Spleen (tissue), 13 donors: ENCODE measurements at regions of chr1 and their contacts with region 1.

Region 1: DNA sequence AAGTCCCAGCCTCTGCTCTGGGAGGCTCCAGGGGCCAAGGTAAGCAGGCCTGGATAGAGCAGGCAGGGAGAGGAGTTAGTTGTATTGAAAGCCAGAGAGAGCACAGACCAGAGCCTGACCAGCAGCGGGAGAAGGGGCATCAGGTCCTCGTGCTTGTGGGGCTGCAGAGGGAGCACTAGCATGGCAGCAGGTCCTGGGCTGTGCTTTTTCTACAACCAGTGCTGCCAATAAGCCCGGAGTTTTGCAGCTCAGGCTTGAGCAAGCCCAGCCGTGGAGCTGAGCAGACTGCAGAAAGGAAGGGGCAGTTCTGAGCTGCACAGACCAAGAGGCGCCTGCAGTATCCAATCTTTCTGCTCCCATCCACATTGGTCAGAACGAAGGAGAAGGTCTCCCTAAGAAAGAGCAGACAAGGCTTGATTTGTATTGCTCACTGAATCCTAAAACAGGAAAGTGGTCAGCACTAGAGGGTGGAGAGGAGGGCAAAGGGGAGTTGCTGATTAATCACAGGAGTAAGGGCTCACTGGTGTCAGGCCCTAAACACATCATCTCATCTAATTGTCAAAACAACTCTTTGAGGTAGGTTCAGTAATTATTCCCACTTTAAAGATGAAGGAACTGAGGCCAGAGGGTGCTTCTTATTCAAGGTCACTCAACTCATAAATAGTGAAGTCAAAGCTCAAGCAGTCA is 2.7 kb downstream of the DENND2D start:
- DNase-seq: peak; percentile 88
- H3K4me3 ChIP-seq: peak overlapping the region; percentile 38 to 88 (median 52)
- H3K27ac ChIP-seq: peak overlapping the region; percentile 96 to 100 (median 98)
- H3K4me1 ChIP-seq: peaks cover 79 to 100% (median 99%) of the 10 kb centered on the region in 6 donors
- H3K27me3 ChIP-seq: no peaks in the 10 kb centered on the region
- CTCF ChIP-seq: peak in 7 of 11 experiments; percentile 28 to 73 (median 42)
- POLR2A ChIP-seq: no peak

Region 2: GRCh38 chr1:111139956-111140679 is 57.6 kb before region 1 on chr1 and contains the starts of genes CEPT1 and DRAM2:
- intact Hi-C with region 1: loop called (anchors 10 kb)
- DNase-seq: peak; percentile 99
- H3K4me3 ChIP-seq: peak within 1 kb of the TSS; percentile 75 to 94 (median 85)
- H3K27ac ChIP-seq: peak within 1 kb of the TSS; percentile 82 to 99 (median 96)
- H3K4me1 ChIP-seq: peaks cover 23 to 89% (median 81%) of the 10 kb centered on the region in 6 donors
- H3K27me3 ChIP-seq: no peaks in the 10 kb centered on the region
- CTCF ChIP-seq: peak in 1 of 11 experiments; percentile 19
- POLR2A ChIP-seq: peak; percentile 37 to 74 (median 39)
- total RNA-seq, gene CEPT1: 90.9 to 140 (median 105) TPM
- total RNA-seq, gene DRAM2: 64.0 to 188 (median 81.0) TPM